ENCODE measurements at regions of chr17 and their contacts with region 1.

Region 1: DNA sequence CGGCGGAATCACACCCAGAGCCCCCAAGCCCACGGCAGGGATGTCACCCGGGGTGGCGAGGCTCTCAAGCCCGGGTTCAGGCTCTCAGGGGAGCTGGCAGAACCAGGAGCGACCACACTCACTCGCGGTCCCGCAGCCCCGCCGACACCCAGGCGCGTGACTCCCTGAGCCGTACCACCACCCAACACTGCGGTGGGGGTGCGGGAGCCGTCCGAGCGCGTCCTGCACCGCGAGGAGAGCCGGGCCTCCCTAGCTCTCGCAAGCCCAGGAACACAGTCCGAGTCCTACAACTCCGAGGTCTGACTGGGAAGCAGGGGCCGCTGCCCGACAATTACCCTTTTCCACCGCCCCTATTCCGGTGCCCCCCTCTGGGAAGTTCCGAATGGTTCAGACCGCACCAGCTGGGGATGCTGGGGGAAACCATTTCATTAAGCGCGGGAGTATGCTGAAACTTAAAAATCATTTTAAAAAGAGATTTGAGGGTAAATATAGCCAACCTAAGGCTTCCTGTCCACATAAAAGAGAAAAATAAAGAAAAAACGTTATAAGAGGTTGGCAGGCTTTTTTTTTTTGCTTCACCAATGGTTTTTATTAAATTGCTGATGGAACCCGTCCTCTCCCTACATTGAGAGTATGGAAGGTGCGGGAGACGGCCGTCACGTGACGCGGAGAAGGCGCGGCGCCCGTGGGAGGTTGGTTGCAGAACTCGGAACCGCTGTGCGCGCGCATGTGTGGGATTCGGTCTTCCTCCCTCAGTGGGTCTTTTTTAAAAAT is at the start of gene FLCN:
- DNase-seq: peak; percentile 91 to 96 (median 94)
- H3K4me3 ChIP-seq: peak within 1 kb of the TSS; percentile 64 to 100 (median 98)
- H3K27ac ChIP-seq: peak within 1 kb of the TSS; percentile 95 to 100 (median 100)
- H3K27me3 ChIP-seq: no peaks in the 10 kb centered on the region
- CTCF ChIP-seq: peak in 7 of 56 donors; percentile 4 to 35 (median 10)
- total RNA-seq, gene FLCN: 77.5 to 263 (median 146) TPM

Region 2: GRCh38 chr17:17206124-17206912 is 30.9 kb before region 1 on chr17 and contains the start of gene PLD6:
- intact Hi-C with region 1: loop called in 1 of 2 experiments (anchors 2 kb)
- DNase-seq: peak in 9 of 10 donors; percentile 37 to 81 (median 62)
- H3K4me3 ChIP-seq: peak within 1 kb of the TSS; percentile 32 to 75 (median 65)
- H3K27ac ChIP-seq: peak within 1 kb of the TSS; percentile 13 to 90 (median 77)
- H3K27me3 ChIP-seq: no peaks in the 10 kb centered on the region
- CTCF ChIP-seq: peak in 6 of 56 donors; percentile 13 to 23 (median 17)
- total RNA-seq, gene PLD6: 5.7 to 19.4 (median 9.9) TPM

Region 3: GRCh38 chr17:17280613-17281549 is 43.7 kb after region 1 on chr17 and contains the start of gene COPS3:
- intact Hi-C with region 1: loop called in 1 of 2 experiments (anchors 1 kb)
- DNase-seq: peak; percentile 98 to 100 (median 99)
- H3K4me3 ChIP-seq: peak within 1 kb of the TSS; percentile 72 to 100 (median 96)
- H3K27ac ChIP-seq: peak within 1 kb of the TSS; percentile 83 to 100 (median 97)
- H3K27me3 ChIP-seq: no peaks in the 10 kb centered on the region
- CTCF ChIP-seq: peak in 24 of 56 donors; percentile 1 to 44 (median 16)
- total RNA-seq, gene COPS3: 32.0 to 91.6 (median 61.8) TPM